ENCODE measurements at regions of chr3 and their contacts with region 1.

Region 1: DNA sequence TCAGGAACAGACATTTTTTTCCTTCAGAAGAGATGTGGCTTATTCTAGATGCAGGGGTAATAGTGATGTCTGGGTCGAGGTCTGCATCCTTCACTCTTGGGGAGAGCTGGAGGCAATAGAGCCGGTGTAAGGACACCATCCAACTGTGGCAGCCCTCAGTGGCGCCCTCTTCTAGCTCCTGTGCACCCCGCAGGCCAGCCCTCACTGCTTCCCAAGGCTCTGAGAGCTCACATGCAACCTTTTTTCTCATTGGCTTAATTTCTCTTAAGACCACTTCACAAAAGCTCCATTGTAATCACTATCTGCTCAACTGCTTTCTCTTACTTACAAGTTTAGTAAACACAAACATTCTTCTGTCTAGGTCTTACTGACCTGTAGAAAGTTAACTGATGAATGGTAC is 3.9 kb upstream of the VPS8 start:
- DNase-seq: peak; percentile 49
- H3K4me3 Mint-ChIP-seq: no peak overlapping the region
- H3K27ac Mint-ChIP-seq: no peak overlapping the region
- H3K4me1 Mint-ChIP-seq: peaks cover 21% of the 10 kb centered on the region
- H3K27me3 Mint-ChIP-seq: no peaks in the 10 kb centered on the region
- CTCF ChIP-seq: no peak

Region 2: DNA sequence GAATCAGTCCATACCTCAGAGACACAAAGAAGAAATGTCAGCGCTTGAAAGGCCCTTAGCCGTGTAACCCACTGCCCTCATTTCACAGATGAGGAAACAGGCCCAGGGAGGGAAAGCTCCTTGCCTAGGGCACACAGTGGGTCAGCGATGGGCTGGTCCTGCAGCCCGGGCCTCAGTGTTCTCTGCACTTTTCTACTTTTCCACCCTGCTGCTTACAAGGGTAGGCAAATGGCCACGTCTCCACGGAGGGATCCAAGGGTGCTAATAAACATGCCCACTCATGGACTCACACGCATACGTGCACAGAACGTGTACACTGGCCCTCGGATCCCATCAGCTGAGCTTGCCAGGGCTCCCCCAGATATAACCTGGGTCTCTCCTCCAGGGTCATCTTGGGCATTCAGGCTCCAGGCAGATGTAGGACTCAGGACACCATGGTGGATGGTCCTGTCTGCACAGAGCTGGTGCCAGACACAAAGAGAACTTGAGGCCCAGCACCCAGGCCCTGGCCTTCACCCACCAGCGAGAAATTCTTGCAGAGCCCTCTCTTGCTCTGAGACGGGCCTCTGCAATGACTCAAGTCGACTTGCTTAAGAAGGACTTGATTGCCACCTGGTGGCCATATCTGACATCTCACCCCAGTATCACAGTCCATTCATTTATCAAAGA is 30.6 kb before region 1 on chr3:
- CTCF ChIA-PET with region 1: no interaction called
- intact Hi-C with region 1: loop called (anchors 1 kb)
- DNase-seq: peak; percentile 94
- H3K4me3 Mint-ChIP-seq: no peak overlapping the region
- H3K27ac Mint-ChIP-seq: no peak overlapping the region
- H3K4me1 Mint-ChIP-seq: peaks cover 21% of the 10 kb centered on the region
- H3K27me3 Mint-ChIP-seq: peaks cover 82% of the 10 kb centered on the region
- CTCF ChIP-seq: peak; percentile 96

Region 3: DNA sequence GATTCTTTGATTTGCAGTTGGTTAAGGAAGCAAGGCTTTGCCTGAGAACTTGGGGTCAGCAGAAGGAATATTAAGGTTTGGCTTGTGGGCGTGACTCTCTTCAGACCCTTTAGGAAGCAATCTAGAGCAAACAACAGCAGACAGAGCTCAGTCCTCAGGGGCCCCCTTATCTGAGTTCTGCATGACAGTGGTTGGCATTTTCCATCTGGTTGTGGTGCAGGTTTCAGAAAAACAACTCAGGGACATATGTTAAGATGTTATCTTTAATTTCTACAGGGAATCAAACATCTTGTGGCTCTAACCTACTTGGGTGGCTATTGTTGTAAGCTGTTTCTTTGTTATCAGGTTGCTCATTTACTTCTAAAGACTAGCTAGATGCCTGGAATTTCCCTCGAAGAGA is 145.4 kb after region 1 on chr3:
- CTCF ChIA-PET with region 1: no interaction called
- intact Hi-C with region 1: no loop called
- DNase-seq: no peak
- H3K4me3 Mint-ChIP-seq: no peak overlapping the region
- H3K27ac Mint-ChIP-seq: no peak overlapping the region
- H3K4me1 Mint-ChIP-seq: no peaks in the 10 kb centered on the region
- H3K27me3 Mint-ChIP-seq: no peaks in the 10 kb centered on the region
- CTCF ChIP-seq: no peak

Region 4: GRCh38 chr3:185134509-185134908 is 326.5 kb after region 1 on chr3:
- CTCF ChIA-PET with region 1: no interaction called
- intact Hi-C with region 1: no loop called
- DNase-seq: no peak
- H3K4me3 Mint-ChIP-seq: no peak overlapping the region
- H3K27ac Mint-ChIP-seq: no peak overlapping the region
- H3K4me1 Mint-ChIP-seq: no peaks in the 10 kb centered on the region
- H3K27me3 Mint-ChIP-seq: peaks cover 57% of the 10 kb centered on the region
- CTCF ChIP-seq: no peak

Region 5: DNA sequence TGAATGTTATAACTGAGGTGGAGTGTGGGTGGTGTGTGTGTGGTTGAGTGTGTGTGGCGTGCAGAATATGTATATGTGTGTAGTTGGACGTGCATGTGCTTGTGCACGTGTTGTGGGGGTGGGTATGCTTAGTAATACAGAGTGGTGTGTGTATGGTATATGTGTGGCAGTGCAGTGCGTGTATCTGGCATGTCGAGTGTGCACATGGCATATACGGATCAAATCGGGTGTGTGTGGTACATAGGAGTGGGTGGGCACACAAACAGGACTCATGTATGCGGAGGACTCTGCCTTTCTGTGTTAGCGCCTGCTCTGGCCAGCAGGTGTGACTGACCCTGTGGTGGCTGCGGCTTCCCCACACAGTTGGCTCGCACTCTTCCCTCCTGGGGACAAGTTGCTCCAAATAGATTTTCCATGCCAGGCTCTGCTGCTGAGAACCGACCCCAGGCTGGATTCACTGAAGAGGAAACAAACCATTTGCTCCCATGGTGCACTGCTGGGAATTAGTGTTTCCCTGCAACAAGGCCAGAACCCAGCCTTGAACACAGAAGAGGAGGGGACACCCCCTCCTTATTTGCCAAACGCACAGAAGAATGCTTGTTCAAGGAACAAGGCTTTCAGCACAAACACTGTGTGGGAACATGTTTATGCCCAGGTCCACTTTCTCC is 346.1 kb after region 1 on chr3:
- CTCF ChIA-PET with region 1: no interaction called
- intact Hi-C with region 1: no loop called
- DNase-seq: no peak
- H3K4me3 Mint-ChIP-seq: no peak overlapping the region
- H3K27ac Mint-ChIP-seq: no peak overlapping the region
- H3K4me1 Mint-ChIP-seq: no peaks in the 10 kb centered on the region
- H3K27me3 Mint-ChIP-seq: no peaks in the 10 kb centered on the region
- CTCF ChIP-seq: no peak

Measured in Calu3 (cell line).